ENCODE measurements at regions of chr1 and their contacts with region 1.

Region 1: DNA sequence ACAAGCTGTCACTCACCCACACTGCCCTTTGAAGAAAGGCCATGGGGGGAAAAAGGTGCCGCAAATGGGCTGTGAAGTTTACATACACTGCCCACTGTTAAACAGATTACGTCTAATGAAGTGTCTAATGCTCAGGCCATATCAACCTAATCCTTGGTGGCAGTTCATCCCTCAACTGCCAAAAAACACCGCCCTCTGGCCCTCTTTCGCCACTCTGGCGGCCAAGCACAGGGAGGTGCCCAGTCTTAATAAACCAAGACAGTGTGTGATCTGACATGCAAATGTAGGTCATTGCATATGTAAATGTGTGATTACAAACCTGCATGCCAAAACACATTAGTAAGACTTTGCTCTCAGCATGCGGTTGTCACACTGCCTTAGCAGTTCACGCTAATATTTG is 89.5 kb downstream of the NEK7 start:
- DNase-seq: no peak
- ATAC-seq: no peak
- H3K4me3 ChIP-seq: no peak overlapping the region
- H3K27ac ChIP-seq: no peak overlapping the region
- H3K4me1 ChIP-seq: peaks cover 8 to 19% of the 10 kb centered on the region in 2 donors
- H3K27me3 ChIP-seq: no peaks in the 10 kb centered on the region
- CTCF ChIP-seq: no peak
- POLR2A ChIP-seq: no peak

Region 2: GRCh38 chr1:198143797-198144196 is 102.5 kb before region 1 on chr1:
- in situ Hi-C with region 1: no loop called
- intact Hi-C with region 1: no loop called
- DNase-seq: no peak
- ATAC-seq: no peak
- H3K4me3 ChIP-seq: no peak overlapping the region
- H3K27ac ChIP-seq: no peak overlapping the region
- H3K4me1 ChIP-seq: no peaks in the 10 kb centered on the region
- H3K27me3 ChIP-seq: no peaks in the 10 kb centered on the region
- CTCF ChIP-seq: no peak
- POLR2A ChIP-seq: no peak

Region 3: DNA sequence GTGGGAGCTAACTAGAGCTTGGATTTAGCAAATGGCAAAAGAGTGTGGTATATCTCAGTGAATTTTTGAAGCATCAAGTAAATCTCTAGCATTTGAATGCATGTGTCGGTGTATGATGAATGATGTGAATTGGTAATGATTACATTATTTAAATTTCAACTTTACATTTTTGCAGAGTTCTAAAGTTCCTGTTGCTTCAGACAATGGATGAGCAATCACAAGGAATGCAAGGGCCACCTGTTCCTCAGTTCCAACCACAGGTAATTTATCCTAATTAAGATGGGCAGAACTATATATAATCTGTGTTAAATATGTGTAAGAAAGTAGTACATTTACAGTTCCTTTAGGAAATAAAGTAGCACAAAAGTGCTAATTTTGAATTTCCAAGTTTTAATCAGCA is 14.0 kb before region 1 on chr1:
- in situ Hi-C with region 1: no loop called
- intact Hi-C with region 1: loop called (anchors 2 kb)
- DNase-seq: no peak
- ATAC-seq: no peak
- H3K4me3 ChIP-seq: no peak overlapping the region
- H3K27ac ChIP-seq: no peak overlapping the region
- H3K4me1 ChIP-seq: peaks cover 4 to 22% of the 10 kb centered on the region in 2 donors
- H3K27me3 ChIP-seq: no peaks in the 10 kb centered on the region
- CTCF ChIP-seq: no peak
- POLR2A ChIP-seq: no peak

Measured in gastrocnemius medialis (tissue), 4 donors.